ENCODE measurements at regions of chr3 and their contacts with region 1.

Region 1: DNA sequence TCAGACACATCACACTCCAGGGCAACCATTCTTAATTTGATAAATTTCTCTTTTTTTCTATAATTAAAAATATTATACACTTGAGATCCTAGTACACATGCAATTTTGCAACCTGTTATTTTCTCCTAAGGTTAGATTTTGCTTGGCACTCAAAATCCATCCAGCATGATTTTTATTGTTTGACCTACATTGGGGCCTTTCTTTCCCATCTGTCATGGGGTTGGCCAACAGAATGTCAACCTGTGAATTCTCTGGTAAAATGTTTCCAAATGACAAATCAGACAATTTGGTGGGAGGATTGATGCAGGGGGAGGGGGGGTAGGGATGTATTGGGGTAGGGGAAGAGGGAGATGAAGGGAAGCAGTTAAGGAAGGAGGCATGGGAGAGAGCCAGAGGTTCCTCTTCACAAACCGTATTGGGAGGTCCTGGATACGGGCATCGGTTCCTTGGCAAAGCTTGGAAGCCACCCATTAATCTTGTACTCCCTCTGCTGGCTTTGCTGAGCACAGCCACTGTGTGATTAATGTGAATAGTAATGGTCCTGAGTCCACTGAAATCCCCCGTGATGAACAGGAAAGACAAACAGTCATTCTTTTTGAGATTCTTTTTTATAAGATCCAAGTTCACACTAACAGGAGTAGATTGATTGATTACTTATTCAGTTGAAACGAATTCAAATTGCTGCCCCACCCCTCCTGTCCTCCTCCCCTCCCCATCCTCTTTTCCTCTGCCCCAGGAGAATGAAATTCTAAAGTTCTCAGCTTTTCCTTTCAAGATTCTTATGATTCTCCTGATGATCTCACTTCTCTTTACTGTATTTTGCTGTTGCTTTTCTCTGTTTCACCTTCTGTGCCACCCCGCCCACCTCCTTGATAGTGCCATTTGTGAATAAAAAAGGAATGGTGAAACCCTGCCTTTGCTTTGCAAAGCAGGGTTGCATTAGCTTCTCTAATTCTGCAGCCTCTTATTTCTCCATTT is 82.2 kb upstream of the SLC25A26 start:
- DNase-seq: peak; percentile 49
- H3K4me3 ChIP-seq: no peak overlapping the region
- H3K27ac ChIP-seq: no peak overlapping the region
- H3K4me1 ChIP-seq: peaks cover under 1% of the 10 kb centered on the region
- H3K27me3 ChIP-seq: no peaks in the 10 kb centered on the region
- CTCF ChIP-seq: peak; percentile 89 to 90

Region 2: DNA sequence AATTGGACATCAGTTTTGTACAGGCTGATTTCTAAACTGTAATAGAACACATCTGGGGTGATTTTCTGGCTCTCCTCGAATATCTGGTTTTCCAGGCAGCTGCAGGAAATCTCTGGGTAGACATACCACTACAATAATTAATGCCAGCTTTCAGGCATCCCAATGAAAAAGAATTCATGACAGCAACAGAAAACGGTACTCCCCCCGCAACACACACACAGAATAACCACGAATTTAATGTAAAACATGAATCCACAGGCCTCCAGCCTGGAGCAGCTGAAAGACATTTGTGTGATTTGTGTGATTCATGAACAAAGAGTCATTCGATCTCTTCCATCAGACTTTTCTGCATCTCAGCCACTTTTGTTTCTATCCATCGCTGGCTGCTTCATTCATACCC is 362.1 kb before region 1 on chr3:
- CTCF ChIA-PET with region 1: no interaction called
- dilution Hi-C with region 1: no loop called
- in situ Hi-C with region 1: loop called (anchors 5 to 10 kb)
- intact Hi-C with region 1: no loop called
- DNase-seq: peak; percentile 32
- H3K4me3 ChIP-seq: no peak overlapping the region
- H3K27ac ChIP-seq: no peak overlapping the region
- H3K4me1 ChIP-seq: no peaks in the 10 kb centered on the region
- H3K27me3 ChIP-seq: no peaks in the 10 kb centered on the region
- CTCF ChIP-seq: no peak

Region 3: DNA sequence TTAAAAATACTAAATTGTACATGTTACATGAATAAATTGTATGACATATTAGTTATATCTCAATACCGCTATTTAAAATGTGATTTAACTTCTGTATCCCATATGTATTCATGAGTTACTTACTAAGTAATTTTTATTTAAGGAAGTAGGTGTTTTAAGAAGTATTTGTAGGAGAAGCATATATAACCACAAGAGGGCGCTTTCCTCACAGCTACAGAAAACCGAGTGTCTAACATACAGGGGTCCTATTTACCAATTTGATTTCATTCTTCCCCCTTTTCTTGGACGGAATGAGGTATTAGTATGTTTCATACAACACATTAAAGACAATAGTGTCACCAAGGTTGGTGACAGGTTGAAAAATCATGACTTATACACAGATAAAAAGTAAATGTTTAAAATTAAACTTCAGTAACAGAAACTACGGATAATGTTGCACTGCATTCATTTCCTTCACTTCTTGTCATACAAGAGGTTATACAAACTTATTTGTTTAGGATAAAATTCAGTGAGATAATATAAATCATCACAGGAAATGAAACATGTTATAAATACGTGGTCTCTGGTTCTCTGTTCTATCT is 353.5 kb before region 1 on chr3:
- CTCF ChIA-PET with region 1: no interaction called
- dilution Hi-C with region 1: no loop called
- in situ Hi-C with region 1: loop called in 1 of 2 experiments (anchors 10 kb)
- intact Hi-C with region 1: loop called (anchors 1 kb)
- DNase-seq: peak; percentile 9
- H3K4me3 ChIP-seq: no peak overlapping the region
- H3K27ac ChIP-seq: no peak overlapping the region
- H3K4me1 ChIP-seq: no peaks in the 10 kb centered on the region
- H3K27me3 ChIP-seq: no peaks in the 10 kb centered on the region
- CTCF ChIP-seq: peak; percentile 57 to 69

Region 4: GRCh38 chr3:65902304-65902793 is 236.3 kb before region 1 on chr3:
- CTCF ChIA-PET with region 1: no interaction called
- dilution Hi-C with region 1: no loop called
- in situ Hi-C with region 1: no loop called
- intact Hi-C with region 1: loop called (anchors 5 kb)
- DNase-seq: peak; percentile 80
- H3K4me3 ChIP-seq: peak overlapping the region; percentile 49 to 56 (median 56)
- H3K27ac ChIP-seq: peak overlapping the region; percentile 73
- H3K4me1 ChIP-seq: peaks cover 11% of the 10 kb centered on the region
- H3K27me3 ChIP-seq: no peaks in the 10 kb centered on the region
- CTCF ChIP-seq: no peak

Region 5: DNA sequence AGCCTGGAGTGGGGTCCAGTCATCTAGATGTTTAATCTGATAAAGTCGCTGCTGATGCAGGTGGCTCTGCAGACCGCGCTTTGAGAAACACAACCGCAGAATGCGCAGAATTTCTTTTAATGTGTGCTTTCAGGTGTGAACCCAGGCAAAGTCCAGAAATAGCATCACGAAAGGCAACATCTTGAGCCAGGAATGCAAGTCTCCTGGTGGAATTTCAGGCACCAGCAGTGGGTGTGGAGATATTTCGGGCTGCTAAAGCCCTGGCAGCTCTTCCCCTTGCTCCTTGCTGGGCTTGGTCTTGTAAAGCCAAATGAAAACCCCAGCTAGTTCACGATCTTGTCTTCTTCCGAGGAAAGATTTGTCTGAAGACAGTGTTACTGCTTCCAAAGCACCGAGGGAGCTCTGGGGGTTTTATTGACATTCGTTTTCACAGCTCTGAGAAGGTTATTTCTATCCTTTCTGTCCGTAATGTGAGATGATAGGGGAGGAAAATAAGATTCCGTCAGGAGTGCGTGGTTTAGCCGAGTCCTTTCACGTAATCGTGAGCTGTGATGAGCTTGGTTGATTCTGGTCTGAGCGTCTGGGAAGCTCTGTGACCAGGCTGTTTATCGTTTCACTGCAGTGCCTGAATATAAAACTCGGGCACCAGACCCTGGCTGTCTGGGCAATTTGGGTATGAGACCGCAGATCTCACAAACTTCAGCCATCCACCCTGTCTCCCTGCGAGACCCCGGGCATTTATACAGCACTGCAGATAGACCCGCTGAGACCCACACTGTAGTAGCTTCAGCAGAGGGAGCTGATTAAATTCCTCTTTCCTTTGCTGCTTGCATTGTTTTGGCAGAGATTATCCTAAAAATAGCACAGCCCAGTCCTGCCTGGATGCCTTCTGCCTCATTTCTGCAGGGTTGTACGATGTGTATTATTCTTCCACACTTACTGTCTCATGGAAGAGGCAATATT is 15.1 kb after region 1 on chr3:
- CTCF ChIA-PET with region 1: no interaction called
- dilution Hi-C with region 1: no loop called
- in situ Hi-C with region 1: no loop called
- intact Hi-C with region 1: no loop called
- DNase-seq: no peak
- H3K4me3 ChIP-seq: no peak overlapping the region
- H3K27ac ChIP-seq: no peak overlapping the region
- H3K4me1 ChIP-seq: no peaks in the 10 kb centered on the region
- H3K27me3 ChIP-seq: peaks cover 5% of the 10 kb centered on the region
- CTCF ChIP-seq: no peak